ENCODE measurements at regions of chr12 and their contacts with region 1.

Region 1: GRCh38 chr12:95998611-95999286 is 2.6 kb upstream of the HAL start:
- DNase-seq: no peak
- H3K4me3 ChIP-seq: no peak overlapping the region
- H3K27me3 ChIP-seq: no peaks in the 10 kb centered on the region
- CTCF ChIP-seq: peak; percentile 58

Region 2: GRCh38 chr12:95700316-95700785 is 298.4 kb before region 1 on chr12:
- CTCF ChIA-PET with region 1: no interaction called
- POLR2A ChIA-PET with region 1: no interaction called
- DNase-seq: peak; percentile 82
- H3K4me3 ChIP-seq: no peak overlapping the region
- H3K27me3 ChIP-seq: no peaks in the 10 kb centered on the region
- CTCF ChIP-seq: no peak

Region 3: GRCh38 chr12:95918194-95918993 is 80.4 kb before region 1 on chr12:
- CTCF ChIA-PET with region 1: interaction called, 41 read pairs
- POLR2A ChIA-PET with region 1: no interaction called
- DNase-seq: no peak
- H3K4me3 ChIP-seq: no peak overlapping the region
- H3K27me3 ChIP-seq: 0 out of 2 replicates have a peak, but pooled peaks cover 2% of the 10 kb centered on the region
- CTCF ChIP-seq: peak; percentile 86

Region 4: GRCh38 chr12:95986635-95987570 is 11.8 kb before region 1 on chr12:
- CTCF ChIA-PET with region 1: interaction called, 30 read pairs
- POLR2A ChIA-PET with region 1: no interaction called
- DNase-seq: no peak
- H3K4me3 ChIP-seq: no peak overlapping the region
- H3K27me3 ChIP-seq: no peaks in the 10 kb centered on the region; the same call in 1 of the 2 replicates
- CTCF ChIP-seq: no peak

Region 5: GRCh38 chr12:96015672-96016071 is 16.9 kb after region 1 on chr12:
- CTCF ChIA-PET with region 1: interaction called, 17 read pairs
- POLR2A ChIA-PET with region 1: no interaction called
- DNase-seq: no peak
- H3K4me3 ChIP-seq: no peak overlapping the region
- H3K27me3 ChIP-seq: no peaks in the 10 kb centered on the region
- CTCF ChIP-seq: peak; percentile 49

Region 6: GRCh38 chr12:96073346-96074330 is 74.9 kb after region 1 on chr12:
- CTCF ChIA-PET with region 1: no interaction called
- POLR2A ChIA-PET with region 1: no interaction called
- DNase-seq: no peak
- H3K4me3 ChIP-seq: no peak overlapping the region
- H3K27me3 ChIP-seq: peaks cover 4% of the 10 kb centered on the region; the same call in 1 of the 2 replicates
- CTCF ChIP-seq: no peak

Region 7: GRCh38 chr12:97921979-97922722 is 1923.4 kb after region 1 on chr12:
- CTCF ChIA-PET with region 1: no interaction called
- POLR2A ChIA-PET with region 1: no interaction called
- DNase-seq: peak; percentile 29
- H3K4me3 ChIP-seq: no peak overlapping the region
- H3K27me3 ChIP-seq: no peaks in the 10 kb centered on the region; the same call in 1 of the 2 replicates
- CTCF ChIP-seq: no peak

Measured in BJ (cell line).